Activated CD4-positive, alpha-beta T cell treated with anti-CD3 and anti-CD28 coated beads for 36 hours (primary cell): ENCODE measurements at regions of chr11 and their contacts with region 1.

Region 1: DNA sequence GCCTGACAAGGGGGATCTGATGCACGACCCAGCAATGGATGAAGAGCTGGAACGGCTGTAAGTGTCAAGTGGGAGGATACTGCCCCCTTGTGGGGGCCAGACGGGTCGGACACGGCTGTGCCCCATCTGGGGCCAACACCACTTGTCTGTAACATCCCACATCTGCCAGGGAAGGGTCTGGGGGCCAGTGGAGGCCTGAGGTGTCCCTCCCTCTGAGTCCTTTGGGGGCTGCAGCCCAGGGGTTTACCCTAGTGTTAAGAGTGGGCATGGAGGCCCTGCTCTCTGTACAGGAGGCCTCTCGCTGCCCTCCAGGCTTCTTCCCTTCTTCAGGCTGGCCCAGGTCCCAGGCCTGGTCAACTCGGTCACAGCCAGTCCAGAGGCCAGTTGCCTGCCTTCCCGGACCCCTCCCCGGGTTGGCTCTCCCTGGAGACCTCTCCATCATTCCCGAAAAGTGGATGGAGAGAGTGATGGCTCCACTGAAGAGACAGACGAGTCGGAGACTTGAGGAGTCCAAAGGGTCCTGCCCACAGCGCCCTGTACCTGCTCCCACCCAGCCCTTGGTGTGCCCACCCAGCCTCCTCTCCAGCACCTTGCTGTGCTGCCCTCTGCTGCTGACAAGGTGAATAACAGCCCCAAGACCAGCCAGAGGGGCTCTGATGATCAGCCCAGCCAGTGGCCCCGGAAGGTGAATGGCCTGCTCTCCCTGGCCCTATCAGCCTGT is 15.4 kb downstream of the ARFGAP2 start:
- DNase-seq: peak; percentile 77
- ATAC-seq: peak; percentile 83
- H3K4me3 Mint-ChIP-seq: no peak overlapping the region
- H3K27ac Mint-ChIP-seq: no peak overlapping the region
- H3K4me1 Mint-ChIP-seq: no peaks in the 10 kb centered on the region
- H3K27me3 Mint-ChIP-seq: no peaks in the 10 kb centered on the region

Region 2: DNA sequence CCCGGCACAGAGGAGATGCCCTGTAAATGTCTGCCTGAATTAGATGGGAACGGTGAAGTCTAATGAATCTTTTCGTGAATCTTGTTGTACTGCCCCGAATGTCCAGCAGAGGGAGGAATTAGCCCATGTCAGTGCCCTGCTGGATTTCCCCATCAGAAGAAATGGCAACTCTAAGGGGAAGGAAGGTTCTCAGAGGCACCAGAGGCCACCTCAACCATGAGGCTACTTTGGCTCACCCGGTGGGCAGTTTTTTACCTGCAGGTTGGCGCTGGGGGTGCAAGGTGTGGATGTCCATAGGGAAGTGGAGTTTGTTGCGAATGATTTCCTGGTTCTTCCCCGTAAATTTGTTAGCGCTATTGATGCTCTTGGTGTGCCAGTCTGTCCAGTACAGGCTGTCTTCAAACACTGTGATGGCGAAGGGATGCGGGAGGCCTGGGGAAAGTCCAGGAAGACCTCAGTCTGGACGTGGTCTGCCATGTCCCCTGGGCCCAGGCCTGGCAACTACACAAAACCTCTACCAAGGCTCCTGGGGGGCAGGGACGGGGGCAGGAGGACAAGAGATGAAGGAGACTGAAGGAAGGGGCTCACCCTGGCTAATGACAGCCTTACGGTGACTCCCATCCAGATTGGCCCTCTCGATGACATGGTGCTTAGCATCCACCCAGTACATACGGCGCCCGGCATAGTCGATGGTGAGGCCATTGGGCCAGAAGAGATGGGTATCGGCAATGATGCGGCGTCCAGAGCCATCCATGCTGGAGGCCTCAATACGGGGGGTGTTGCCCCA is 271.4 kb before region 1 on chr11:
- CTCF ChIA-PET with region 1: interaction called, 5 read pairs
- POLR2A ChIA-PET with region 1: interaction called, 5 read pairs
- intact Hi-C with region 1: loop called in 1 of 2 experiments (anchors 1 kb)
- DNase-seq: peak; percentile 83
- ATAC-seq: peak; percentile 86
- H3K4me3 Mint-ChIP-seq: no peak overlapping the region
- H3K27ac Mint-ChIP-seq: no peak overlapping the region
- H3K4me1 Mint-ChIP-seq: peaks cover 2% of the 10 kb centered on the region
- H3K27me3 Mint-ChIP-seq: no peaks in the 10 kb centered on the region

Region 3: DNA sequence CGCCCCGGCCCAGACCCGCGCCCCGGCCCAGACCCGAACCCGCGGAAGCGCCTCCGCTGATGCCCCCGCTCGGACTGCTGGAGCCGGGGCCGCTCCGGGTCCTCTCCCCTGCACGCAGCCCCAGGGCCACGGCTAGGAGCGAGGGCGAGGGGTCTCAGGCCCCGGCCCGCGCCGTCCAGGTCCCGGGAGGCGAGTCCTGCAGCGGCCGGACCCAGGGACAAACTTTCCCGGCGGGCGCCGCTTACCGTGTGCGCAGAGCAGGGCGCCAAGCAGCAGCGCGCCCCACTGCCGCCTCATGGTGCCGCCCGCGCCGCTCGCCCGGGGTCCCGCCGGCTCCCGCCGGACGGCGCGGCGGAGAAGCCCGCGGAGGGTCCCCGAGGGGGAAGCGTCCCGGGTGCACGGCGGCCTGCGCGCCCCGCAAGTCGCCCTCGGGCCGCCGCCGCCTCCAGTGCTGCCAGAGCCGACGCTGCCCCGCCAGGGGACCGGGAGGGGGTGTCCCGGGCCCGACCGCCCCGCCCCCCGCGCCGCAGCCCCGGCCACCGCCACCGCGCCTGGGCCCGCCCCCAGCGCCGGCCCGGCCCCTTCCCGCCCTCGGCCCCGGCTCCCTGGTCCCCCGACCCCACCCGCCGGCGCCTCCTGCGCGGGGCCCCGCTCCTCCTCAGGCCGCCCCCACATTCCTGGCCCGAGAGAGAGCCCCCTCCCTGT is 243.1 kb before region 1 on chr11 and contains the start of gene LRP4:
- CTCF ChIA-PET with region 1: interaction called, 4 read pairs
- POLR2A ChIA-PET with region 1: interaction called, 5 read pairs
- intact Hi-C with region 1: loop called in 1 of 2 experiments (anchors 1 kb)
- DNase-seq: peak; percentile 62
- ATAC-seq: peak; percentile 57
- H3K4me3 Mint-ChIP-seq: peak within 1 kb of the TSS; percentile 64
- H3K27ac Mint-ChIP-seq: no peak within 1 kb of the TSS
- H3K4me1 Mint-ChIP-seq: peaks cover 25% of the 10 kb centered on the region
- H3K27me3 Mint-ChIP-seq: peaks cover 49% of the 10 kb centered on the region
- total RNA-seq, gene LRP4: 0.02 to 0.18 TPM